ENCODE measurements at regions of chr19 and their contacts with region 1.

Region 1: GRCh38 chr19:4471403-4472173 is 509 bp upstream of the HDGFL2 start:
- DNase-seq: peak; percentile 95 to 100
- ATAC-seq: peak; percentile 82 to 93 (median 82)
- H3K4me3 ChIP-seq: peak overlapping the region; percentile 77
- H3K4me3 Mint-ChIP-seq: no peak overlapping the region
- H3K27ac ChIP-seq: peak overlapping the region; percentile 82
- H3K27ac Mint-ChIP-seq: no peak overlapping the region
- H3K4me1 ChIP-seq: peaks cover 35% of the 10 kb centered on the region
- H3K4me1 Mint-ChIP-seq: peaks cover 20 to 25% of the 10 kb centered on the region in 2 donors
- H3K27me3 ChIP-seq: no peaks in the 10 kb centered on the region
- H3K27me3 Mint-ChIP-seq: no peaks in the 10 kb centered on the region
- CTCF ChIP-seq: no peak

Region 2: DNA sequence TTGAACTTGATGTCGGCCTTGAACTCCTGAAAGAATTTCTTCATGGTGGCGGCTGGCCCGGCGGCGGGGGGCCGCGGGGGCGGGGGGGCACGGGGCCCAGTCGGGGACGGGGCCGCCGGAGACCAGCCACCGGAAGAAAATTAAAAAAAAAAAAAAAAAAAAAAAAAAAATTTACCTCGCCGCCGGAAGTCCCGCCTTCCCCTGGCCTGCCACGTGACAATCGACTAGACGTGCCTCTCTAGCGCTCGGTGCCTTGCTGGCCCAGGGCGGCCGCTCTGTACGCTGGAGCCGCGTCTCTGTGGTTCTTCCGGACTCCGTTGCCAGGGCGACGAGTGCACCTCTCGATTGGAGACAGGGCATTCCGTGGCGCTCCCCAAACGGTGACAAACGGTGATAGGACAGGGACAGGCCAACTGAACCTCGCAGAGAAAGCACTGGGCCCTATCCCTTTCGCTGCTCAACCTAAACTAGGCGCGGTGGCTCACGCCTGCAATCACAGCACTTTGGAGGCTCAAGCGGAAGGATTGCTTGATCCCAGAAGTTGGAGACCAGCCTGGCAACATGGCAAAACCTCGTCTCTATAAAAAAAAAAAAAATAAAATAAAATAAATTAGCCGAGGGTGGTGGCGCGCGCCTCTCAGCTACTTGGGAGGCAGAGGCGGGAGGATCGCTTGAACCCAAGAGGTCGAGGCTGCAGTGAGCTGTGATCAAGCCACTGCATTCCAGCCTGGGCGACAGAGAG is 13.8 kb before region 1 on chr19 and contains the start of gene UBXN6:
- intact Hi-C with region 1: loop called (anchors 1 kb)
- DNase-seq: peak; percentile 95 to 99
- ATAC-seq: peak; percentile 96 to 99 (median 98)
- H3K4me3 ChIP-seq: peak within 1 kb of the TSS; percentile 45
- H3K4me3 Mint-ChIP-seq: peak within 1 kb of the TSS; percentile 94
- H3K27ac ChIP-seq: peak within 1 kb of the TSS; percentile 38
- H3K27ac Mint-ChIP-seq: peak within 1 kb of the TSS; percentile 89 to 97
- H3K4me1 ChIP-seq: peaks cover 24% of the 10 kb centered on the region
- H3K4me1 Mint-ChIP-seq: peaks cover 10 to 28% of the 10 kb centered on the region in 2 donors
- H3K27me3 ChIP-seq: no peaks in the 10 kb centered on the region
- H3K27me3 Mint-ChIP-seq: no peaks in the 10 kb centered on the region
- CTCF ChIP-seq: no peak
- total RNA-seq, gene UBXN6: 54.3 to 67.7 (median 63.3) TPM

Measured in natural killer cell (primary cell).